ENCODE measurements at regions of chr9 and their contacts with region 1.

Region 1: GRCh38 chr9:92425474-92425873 is 1.2 kb upstream of the OMD start:
- DNase-seq: no peak
- ATAC-seq: peak in 1 of 8 donors; percentile 39
- H3K4me3 ChIP-seq: no peak overlapping the region
- H3K27ac ChIP-seq: peak overlapping the region in 8 of 10 donors; percentile 8 to 69 (median 40)
- H3K4me1 ChIP-seq: peaks cover 0 to 21% (median 0%) of the 10 kb centered on the region in 9 donors
- H3K27me3 ChIP-seq: no peaks in the 10 kb centered on the region
- CTCF ChIP-seq: no peak

Region 2: GRCh38 chr9:92332577-92333281 is 92.7 kb before region 1 on chr9:
- intact Hi-C with region 1: loop called in 1 of 10 experiments (anchors 10 kb)
- DNase-seq: peak in 1 of 2 donors; percentile 16
- ATAC-seq: peak in 7 of 8 donors; percentile 57 to 83 (median 79)
- H3K4me3 ChIP-seq: no peak overlapping the region
- H3K27ac ChIP-seq: peak overlapping the region in 8 of 10 donors; percentile 33 to 69 (median 63)
- H3K4me1 ChIP-seq: peaks cover 0 to 15% (median 0%) of the 10 kb centered on the region in 9 donors
- H3K27me3 ChIP-seq: no peaks in the 10 kb centered on the region
- CTCF ChIP-seq: no peak

Region 3: GRCh38 chr9:92342825-92343488 is 82.5 kb before region 1 on chr9:
- intact Hi-C with region 1: loop called in 3 of 10 experiments (anchors 10 kb)
- DNase-seq: no peak
- ATAC-seq: no peak
- H3K4me3 ChIP-seq: no peak overlapping the region
- H3K27ac ChIP-seq: no peak overlapping the region
- H3K4me1 ChIP-seq: no peaks in the 10 kb centered on the region
- H3K27me3 ChIP-seq: no peaks in the 10 kb centered on the region
- CTCF ChIP-seq: peak in 6 of 9 donors; percentile 32 to 51 (median 40)

Region 4: DNA sequence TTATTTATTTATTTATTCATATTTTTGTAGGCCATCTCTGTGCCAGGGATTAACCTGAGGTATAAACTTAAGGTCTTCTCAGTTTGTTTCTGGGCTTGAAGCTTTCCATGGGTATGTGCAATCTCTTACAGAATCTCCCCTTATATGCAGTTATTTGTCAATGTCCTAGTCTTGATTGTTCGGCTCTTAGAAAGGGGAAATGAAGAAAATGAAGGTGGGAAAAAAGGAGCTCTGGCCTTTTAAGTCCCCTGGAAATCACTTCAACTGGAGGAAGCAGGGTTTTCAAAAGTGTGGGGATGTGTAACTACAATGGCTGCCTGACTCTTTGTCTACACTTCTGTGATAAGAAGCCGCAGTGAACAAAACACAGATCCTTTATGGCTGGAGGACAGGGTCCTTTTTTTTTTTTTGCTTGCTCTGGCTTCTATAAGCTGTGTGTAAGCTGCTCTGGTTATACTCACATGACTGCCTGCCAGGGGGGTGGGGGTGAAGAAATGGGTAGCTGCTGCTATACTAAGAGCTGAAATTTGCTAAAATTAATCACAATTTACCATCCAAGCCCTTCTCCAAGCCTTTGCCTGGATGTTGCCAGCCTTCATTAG is 66.0 kb before region 1 on chr9:
- intact Hi-C with region 1: no loop called
- DNase-seq: no peak
- ATAC-seq: no peak
- H3K4me3 ChIP-seq: no peak overlapping the region
- H3K27ac ChIP-seq: peak overlapping the region in 1 of 10 donors; percentile 38
- H3K4me1 ChIP-seq: peaks cover 0 to 13% (median 0%) of the 10 kb centered on the region in 9 donors
- H3K27me3 ChIP-seq: no peaks in the 10 kb centered on the region
- CTCF ChIP-seq: no peak

Measured in heart right ventricle (tissue), 16 donors.